Mammary epithelial cell (primary cell): ENCODE measurements at regions of chr11 and their contacts with region 1.

Region 1: DNA sequence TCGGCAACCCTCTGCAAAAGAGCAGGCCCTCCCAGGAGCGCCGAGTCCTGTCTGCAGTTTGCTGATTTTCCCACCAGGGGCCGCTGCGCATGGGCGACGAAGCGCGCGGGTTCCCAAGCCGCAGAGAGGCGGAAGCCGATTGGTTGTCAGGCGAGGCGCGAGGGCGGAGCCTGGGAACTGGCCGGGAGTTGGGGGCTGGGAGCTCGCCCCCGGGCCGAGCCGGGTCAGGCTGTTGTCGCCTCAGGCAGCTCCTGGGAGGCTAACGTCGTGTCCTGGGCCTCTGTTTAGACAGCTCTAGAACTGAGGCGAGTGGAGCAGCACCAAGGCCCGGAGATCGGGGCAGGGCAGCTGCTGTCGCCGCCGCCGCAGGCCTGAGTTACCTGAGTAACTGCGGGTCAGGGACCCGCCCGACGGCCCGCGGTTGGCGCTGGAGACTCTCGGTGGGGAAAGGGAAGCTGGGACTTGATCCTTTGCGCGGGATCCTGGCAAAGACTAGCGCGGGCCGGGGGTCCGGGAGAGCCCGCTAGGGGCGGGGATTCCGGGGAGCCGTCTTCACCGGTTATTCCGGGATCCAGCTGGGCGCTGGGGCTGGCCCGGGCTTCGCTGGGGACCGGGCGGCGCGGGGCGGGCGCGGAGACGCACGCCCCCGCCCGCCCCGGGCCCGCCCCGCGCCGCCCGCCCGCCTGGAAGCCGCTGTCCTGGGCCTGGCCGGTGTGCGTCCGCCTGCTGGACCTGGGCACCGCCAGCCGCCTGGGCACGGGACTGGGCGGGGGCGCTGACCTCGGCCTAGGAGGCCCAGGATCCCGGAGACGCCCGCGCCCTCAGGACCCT is at the start of gene STIM1:
- DNase-seq: peak; percentile 87
- H3K4me3 ChIP-seq: peak within 1 kb of the TSS; percentile 69 to 90 (median 87)
- H3K27ac ChIP-seq: peak within 1 kb of the TSS; percentile 79
- H3K4me1 ChIP-seq: peaks cover 30% of the 10 kb centered on the region
- H3K27me3 ChIP-seq: no peaks in the 10 kb centered on the region
- CTCF ChIP-seq: peak; percentile 81 to 92
- total RNA-seq, gene STIM1: 57.0 to 74.0 TPM

Region 2: GRCh38 chr11:3786781-3787428 is 68.3 kb before region 1 on chr11:
- CTCF ChIA-PET with region 1: no interaction called
- dilution Hi-C with region 1: no loop called
- in situ Hi-C with region 1: no loop called
- intact Hi-C with region 1: no loop called
- DNase-seq: no peak
- H3K4me3 ChIP-seq: no peak overlapping the region
- H3K27ac ChIP-seq: no peak overlapping the region
- H3K4me1 ChIP-seq: peaks cover 3% of the 10 kb centered on the region
- H3K27me3 ChIP-seq: no peaks in the 10 kb centered on the region
- CTCF ChIP-seq: no peak

Region 3: DNA sequence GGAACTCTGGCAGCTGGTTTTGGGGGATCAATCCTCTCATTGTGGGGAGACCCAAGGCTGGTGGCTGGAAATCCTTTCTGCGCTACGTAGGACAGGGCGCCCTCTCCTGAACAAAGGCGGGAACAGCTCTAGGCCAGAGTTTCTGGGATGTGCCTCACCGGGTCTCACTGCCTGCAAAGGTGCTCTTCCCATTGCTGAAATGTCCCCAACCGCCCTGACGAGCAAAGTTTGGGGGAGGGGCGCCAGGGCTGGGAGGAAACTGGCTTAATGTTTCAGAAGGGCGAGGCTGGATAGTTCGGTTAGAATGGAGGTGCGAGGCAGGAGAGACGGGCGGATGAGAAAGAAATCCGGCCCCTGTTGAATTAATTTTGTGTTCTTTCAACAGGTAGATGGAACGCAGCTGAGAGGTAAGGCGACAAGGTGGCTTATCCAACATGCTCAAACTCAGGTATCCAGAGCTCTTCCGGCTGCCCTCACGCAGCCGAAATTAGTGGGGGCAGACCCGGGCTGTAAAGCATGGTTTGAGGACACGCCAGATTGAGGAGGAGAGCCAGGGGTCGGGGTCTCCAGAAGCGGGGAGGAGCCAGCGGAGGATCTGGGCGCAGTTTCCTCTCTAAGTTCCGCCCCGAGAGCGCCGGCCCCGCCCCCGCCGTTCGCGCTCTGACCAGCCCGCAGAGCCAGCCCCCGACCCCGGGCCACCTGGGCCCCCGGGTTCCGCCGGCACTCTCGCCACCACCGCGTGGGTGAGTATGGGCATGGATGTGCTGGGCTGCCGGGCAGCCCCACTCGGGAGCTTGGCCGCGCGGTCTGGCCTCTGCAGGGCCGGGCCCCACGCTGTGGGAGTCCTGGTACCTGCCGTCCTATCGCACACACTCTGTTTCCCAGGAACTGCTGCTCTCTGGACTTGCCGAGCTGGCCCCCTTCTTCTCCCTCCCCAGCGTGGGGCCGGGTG is 47.0 kb before region 1 on chr11 and contains the start of gene PGAP2:
- CTCF ChIA-PET with region 1: no interaction called
- dilution Hi-C with region 1: no loop called
- in situ Hi-C with region 1: no loop called
- intact Hi-C with region 1: no loop called
- DNase-seq: peak; percentile 62
- H3K4me3 ChIP-seq: peak within 1 kb of the TSS; percentile 65 to 77 (median 68)
- H3K27ac ChIP-seq: peak within 1 kb of the TSS; percentile 21
- H3K4me1 ChIP-seq: peaks cover 26% of the 10 kb centered on the region
- H3K27me3 ChIP-seq: no peaks in the 10 kb centered on the region
- CTCF ChIP-seq: peak; percentile 77 to 87
- total RNA-seq, gene PGAP2: 20.3 to 36.4 TPM

Region 4: GRCh38 chr11:3920148-3920852 is 65.1 kb after region 1 on chr11:
- CTCF ChIA-PET with region 1: no interaction called
- dilution Hi-C with region 1: no loop called
- in situ Hi-C with region 1: no loop called
- intact Hi-C with region 1: loop called (anchors 1 kb)
- DNase-seq: peak; percentile 86
- H3K4me3 ChIP-seq: no peak overlapping the region
- H3K27ac ChIP-seq: peak overlapping the region; percentile 76
- H3K4me1 ChIP-seq: peaks cover 23% of the 10 kb centered on the region
- H3K27me3 ChIP-seq: no peaks in the 10 kb centered on the region
- CTCF ChIP-seq: no peak

Region 5: GRCh38 chr11:3959015-3959919 is 104.1 kb after region 1 on chr11:
- CTCF ChIA-PET with region 1: interaction called, 4 read pairs
- dilution Hi-C with region 1: no loop called
- in situ Hi-C with region 1: loop called in 1 of 2 experiments (anchors 25 kb)
- intact Hi-C with region 1: loop called (anchors 1 kb)
- DNase-seq: peak; percentile 79
- H3K4me3 ChIP-seq: no peak overlapping the region
- H3K27ac ChIP-seq: peak overlapping the region; percentile 54
- H3K4me1 ChIP-seq: peaks cover 42% of the 10 kb centered on the region
- H3K27me3 ChIP-seq: no peaks in the 10 kb centered on the region
- CTCF ChIP-seq: peak; percentile 19 to 24

Region 6: GRCh38 chr11:4025248-4025966 is 170.2 kb after region 1 on chr11:
- CTCF ChIA-PET with region 1: no interaction called
- dilution Hi-C with region 1: no loop called
- in situ Hi-C with region 1: no loop called
- intact Hi-C with region 1: no loop called
- DNase-seq: peak; percentile 12
- H3K4me3 ChIP-seq: no peak overlapping the region
- H3K27ac ChIP-seq: no peak overlapping the region
- H3K4me1 ChIP-seq: peaks cover 4% of the 10 kb centered on the region
- H3K27me3 ChIP-seq: no peaks in the 10 kb centered on the region
- CTCF ChIP-seq: no peak